ENCODE measurements at regions of chr17 and their contacts with region 1.

Region 1: GRCh38 chr17:3827124-3827773 is 18.8 kb downstream of the NCBP3 start:
- DNase-seq: peak; percentile 76
- H3K4me3 Mint-ChIP-seq: no peak overlapping the region
- H3K27ac Mint-ChIP-seq: no peak overlapping the region
- H3K4me1 Mint-ChIP-seq: no peaks in the 10 kb centered on the region
- H3K27me3 Mint-ChIP-seq: no peaks in the 10 kb centered on the region
- CTCF ChIP-seq: peak; percentile 64

Region 2: GRCh38 chr17:3683054-3683511 is 144.2 kb before region 1 on chr17:
- CTCF ChIA-PET with region 1: interaction called, 3 read pairs
- POLR2A ChIA-PET with region 1: no interaction called
- intact Hi-C with region 1: loop called (anchors 5 kb)
- DNase-seq: peak; percentile 44
- H3K4me3 Mint-ChIP-seq: no peak overlapping the region
- H3K27ac Mint-ChIP-seq: no peak overlapping the region
- H3K4me1 Mint-ChIP-seq: peaks cover 5% of the 10 kb centered on the region
- H3K27me3 Mint-ChIP-seq: no peaks in the 10 kb centered on the region
- CTCF ChIP-seq: peak; percentile 85

Region 3: GRCh38 chr17:3770466-3770865 is 56.8 kb before region 1 on chr17:
- CTCF ChIA-PET with region 1: no interaction called
- POLR2A ChIA-PET with region 1: no interaction called
- intact Hi-C with region 1: no loop called
- DNase-seq: no peak
- H3K4me3 Mint-ChIP-seq: no peak overlapping the region
- H3K27ac Mint-ChIP-seq: no peak overlapping the region
- H3K4me1 Mint-ChIP-seq: no peaks in the 10 kb centered on the region
- H3K27me3 Mint-ChIP-seq: no peaks in the 10 kb centered on the region
- CTCF ChIP-seq: no peak